ENCODE measurements at regions of chr7 and their contacts with region 1.

Region 1: DNA sequence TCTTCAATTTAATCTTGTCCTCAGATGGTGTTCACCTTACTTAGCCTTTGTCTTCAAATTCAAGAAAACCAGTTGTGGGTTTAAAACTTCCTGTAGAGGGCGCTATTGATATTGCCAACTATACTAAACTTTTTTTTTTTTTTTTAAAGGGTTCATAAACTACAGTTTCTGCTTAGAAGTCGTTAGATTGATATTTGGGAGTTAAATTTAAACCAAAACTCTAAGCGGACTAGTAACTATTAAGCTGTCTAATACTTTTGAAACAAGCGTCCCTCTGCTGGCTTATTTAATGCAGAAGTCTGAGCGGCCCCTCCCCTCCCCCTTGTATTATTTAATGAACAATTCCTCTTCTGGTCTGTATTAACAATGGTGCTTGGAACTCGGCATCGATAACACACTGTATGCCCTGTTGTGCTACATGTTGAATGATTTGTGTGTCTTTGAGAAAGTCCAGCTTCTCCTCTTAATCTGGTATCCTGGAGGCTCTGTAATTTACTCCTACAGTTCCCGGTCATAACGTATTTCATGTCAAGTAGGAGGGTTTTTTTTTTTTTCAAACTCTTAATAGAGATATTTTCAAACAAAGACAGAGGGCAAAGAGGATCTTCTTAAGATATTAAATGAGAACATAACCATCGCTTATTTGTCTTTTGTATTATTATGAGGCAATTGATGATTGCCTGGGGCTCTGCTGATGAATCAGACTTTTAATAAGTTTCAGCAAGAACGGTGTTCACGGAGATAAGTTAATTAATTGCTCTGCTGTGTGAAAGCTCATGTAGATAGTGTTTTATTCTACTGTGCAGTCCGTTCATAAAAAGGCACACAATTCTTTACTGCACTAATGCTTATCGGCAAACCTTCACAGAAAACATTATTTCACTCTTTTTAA is 22.6 kb upstream of the CREB5 start:
- DNase-seq: no peak
- H3K4me3 ChIP-seq: peak overlapping the region in 1 of 2 donors; percentile 7
- H3K27ac ChIP-seq: no peak overlapping the region
- H3K4me1 ChIP-seq: no peaks in the 10 kb centered on the region
- H3K27me3 ChIP-seq: no peaks in the 10 kb centered on the region
- CTCF ChIP-seq: peak; percentile 37 to 88 (median 49)
- POLR2A ChIP-seq: no peak

Region 2: DNA sequence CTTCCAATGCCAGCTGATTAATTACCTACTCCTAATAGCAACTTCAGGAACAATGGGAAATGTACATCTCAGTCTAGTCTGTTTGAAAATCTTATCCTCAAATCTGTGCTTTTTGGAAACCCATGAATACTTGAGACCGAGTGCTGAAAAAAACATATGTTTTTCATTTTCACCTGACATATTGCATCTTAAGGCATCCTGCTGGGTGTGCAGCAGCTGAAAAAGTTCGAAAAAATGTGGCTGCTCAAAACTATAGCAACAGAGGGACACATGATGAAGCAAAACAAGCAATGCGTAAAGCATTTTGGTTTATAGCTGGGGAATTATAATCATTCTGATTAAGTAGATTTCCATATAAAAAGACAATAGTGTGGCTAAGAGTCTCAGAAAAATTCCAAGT is 240.6 kb after region 1 on chr7:
- intact Hi-C with region 1: loop called (anchors 5 kb)
- DNase-seq: no peak
- H3K4me3 ChIP-seq: no peak overlapping the region
- H3K27ac ChIP-seq: no peak overlapping the region
- H3K4me1 ChIP-seq: no peaks in the 10 kb centered on the region
- H3K27me3 ChIP-seq: no peaks in the 10 kb centered on the region
- CTCF ChIP-seq: no peak
- POLR2A ChIP-seq: no peak

Region 3: DNA sequence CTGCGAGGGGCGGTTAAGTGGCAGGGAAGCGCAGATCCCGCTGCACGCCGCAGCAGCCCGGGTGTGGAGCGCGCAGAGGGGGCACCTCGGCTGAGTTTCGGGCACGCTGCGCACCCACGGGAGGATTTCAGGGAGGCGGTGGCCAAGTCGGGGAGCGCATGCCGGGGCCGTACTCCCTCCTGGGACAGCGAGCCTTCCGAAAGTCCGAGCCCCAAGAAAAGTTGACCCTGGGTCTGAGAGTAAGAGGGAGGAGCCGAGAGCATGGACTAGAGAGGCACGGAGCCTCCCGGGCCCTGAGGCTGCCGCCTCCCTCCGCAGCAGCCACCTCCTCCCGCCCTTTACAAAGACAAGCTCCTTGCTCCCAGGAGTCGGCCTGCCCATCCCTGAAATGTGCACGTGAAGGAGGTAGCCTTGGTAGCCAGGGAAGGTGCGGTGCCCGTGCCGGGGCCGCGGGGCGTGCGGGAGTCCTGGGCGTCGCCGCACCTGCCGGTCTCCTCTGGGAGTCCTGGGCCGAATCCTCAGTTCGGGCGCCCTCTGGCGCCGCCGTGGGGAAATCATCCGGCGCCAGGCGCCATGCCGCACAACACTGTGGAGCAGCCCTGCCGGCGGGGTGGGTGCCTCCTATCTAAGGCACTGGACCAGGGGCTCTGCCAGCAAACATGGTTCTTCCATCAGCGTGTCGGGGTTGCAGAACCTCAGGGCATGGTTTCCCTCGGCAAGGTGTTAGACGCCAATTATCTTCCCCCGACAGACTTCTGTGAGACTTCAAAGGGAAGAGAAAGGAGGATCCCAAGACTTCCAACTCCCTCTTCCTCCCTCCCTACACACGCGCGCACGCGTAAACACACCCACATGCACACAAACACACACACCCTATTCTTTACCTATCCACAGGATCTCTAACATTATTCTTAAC is 464.3 kb after region 1 on chr7:
- intact Hi-C with region 1: loop called (anchors 5 kb)
- DNase-seq: peak; percentile 89
- H3K4me3 ChIP-seq: peak overlapping the region; percentile 39 to 60
- H3K27ac ChIP-seq: no peak overlapping the region
- H3K4me1 ChIP-seq: no peaks in the 10 kb centered on the region
- H3K27me3 ChIP-seq: no peaks in the 10 kb centered on the region
- CTCF ChIP-seq: peak; percentile 64 to 82 (median 66)
- POLR2A ChIP-seq: no peak

Measured in testis (tissue), 5 donors.